Panc1 (cell line): ENCODE measurements at regions of chr6 and their contacts with region 1.

Region 1: GRCh38 chr6:150529646-150530045 is 70.0 kb upstream of the PLEKHG1 start:
- DNase-seq: no peak
- ATAC-seq: no peak
- H3K4me3 ChIP-seq: no peak overlapping the region
- H3K27ac ChIP-seq: no peak overlapping the region
- H3K4me1 ChIP-seq: no peaks in the 10 kb centered on the region
- H3K27me3 ChIP-seq: no peaks in the 10 kb centered on the region
- CTCF ChIP-seq: no peak

Region 2: GRCh38 chr6:150410906-150411305 is 118.7 kb before region 1 on chr6:
- CTCF ChIA-PET with region 1: no interaction called
- POLR2A ChIA-PET with region 1: interaction called, 11 read pairs
- in situ Hi-C with region 1: no loop called
- intact Hi-C with region 1: no loop called
- DNase-seq: no peak
- ATAC-seq: no peak
- H3K4me3 ChIP-seq: no peak overlapping the region
- H3K27ac ChIP-seq: no peak overlapping the region
- H3K4me1 ChIP-seq: no peaks in the 10 kb centered on the region
- H3K27me3 ChIP-seq: peaks cover 4% of the 10 kb centered on the region; the same call in 1 of the 2 replicates
- CTCF ChIP-seq: no peak

Region 3: DNA sequence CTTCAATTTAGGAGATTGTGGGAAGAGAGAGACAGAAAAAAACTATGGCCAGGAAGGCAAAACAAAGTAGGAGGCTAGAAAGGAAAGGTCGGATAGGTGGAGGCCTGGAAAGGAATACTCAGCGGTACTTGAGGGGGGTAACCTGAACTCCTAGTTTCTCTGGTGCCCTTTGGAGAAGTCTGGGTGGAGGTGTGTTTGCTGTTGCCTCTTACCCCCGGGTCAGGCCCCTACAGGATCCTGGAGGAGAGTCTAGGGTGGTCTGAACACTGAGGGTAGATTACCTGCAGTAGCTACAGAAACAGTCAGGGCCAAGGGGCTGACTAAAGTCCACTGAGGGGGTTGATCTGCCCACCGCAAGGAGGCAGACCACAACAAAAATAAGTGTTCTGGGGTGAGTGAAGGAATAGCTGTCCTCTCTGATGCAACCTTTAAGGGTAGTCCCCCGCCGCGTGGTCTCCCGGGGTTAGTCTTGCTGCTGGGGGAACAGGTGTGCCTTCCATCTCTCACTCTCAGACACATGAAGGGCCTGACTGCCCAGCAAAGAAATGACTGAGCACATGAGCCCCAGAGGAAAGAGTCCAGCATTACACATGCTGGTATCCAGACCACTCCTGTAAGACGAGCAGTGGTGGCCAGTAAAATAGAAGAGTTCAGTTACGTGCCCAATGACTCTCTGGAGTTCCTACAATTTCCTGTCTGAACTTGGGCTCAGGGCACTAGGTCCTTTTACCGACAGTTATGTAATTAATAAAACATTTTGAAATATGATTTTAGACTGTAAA is 395.4 kb after region 1 on chr6:
- CTCF ChIA-PET with region 1: no interaction called
- POLR2A ChIA-PET with region 1: no interaction called
- in situ Hi-C with region 1: no loop called
- intact Hi-C with region 1: no loop called
- DNase-seq: no peak
- ATAC-seq: no peak; the same call in 1 of the 2 replicates
- H3K4me3 ChIP-seq: no peak overlapping the region
- H3K27ac ChIP-seq: no peak overlapping the region
- H3K4me1 ChIP-seq: no peaks in the 10 kb centered on the region
- H3K27me3 ChIP-seq: no peaks in the 10 kb centered on the region
- CTCF ChIP-seq: no peak